A549 (cell line): ENCODE measurements at regions of chr21 and their contacts with region 1.

Region 1: GRCh38 chr21:33608559-33608958 is 20.1 kb upstream of the DONSON start:
- DNase-seq: no peak
- ATAC-seq: no peak
- H3K4me3 ChIP-seq: no peak overlapping the region
- H3K27ac ChIP-seq: no peak overlapping the region
- H3K4me1 ChIP-seq: no peaks in the 10 kb centered on the region
- CTCF ChIP-seq: no peak
- EP300 ChIP-seq: no peak
- POLR2A ChIP-seq: no peak
- RAD21 ChIP-seq: no peak

Region 2: DNA sequence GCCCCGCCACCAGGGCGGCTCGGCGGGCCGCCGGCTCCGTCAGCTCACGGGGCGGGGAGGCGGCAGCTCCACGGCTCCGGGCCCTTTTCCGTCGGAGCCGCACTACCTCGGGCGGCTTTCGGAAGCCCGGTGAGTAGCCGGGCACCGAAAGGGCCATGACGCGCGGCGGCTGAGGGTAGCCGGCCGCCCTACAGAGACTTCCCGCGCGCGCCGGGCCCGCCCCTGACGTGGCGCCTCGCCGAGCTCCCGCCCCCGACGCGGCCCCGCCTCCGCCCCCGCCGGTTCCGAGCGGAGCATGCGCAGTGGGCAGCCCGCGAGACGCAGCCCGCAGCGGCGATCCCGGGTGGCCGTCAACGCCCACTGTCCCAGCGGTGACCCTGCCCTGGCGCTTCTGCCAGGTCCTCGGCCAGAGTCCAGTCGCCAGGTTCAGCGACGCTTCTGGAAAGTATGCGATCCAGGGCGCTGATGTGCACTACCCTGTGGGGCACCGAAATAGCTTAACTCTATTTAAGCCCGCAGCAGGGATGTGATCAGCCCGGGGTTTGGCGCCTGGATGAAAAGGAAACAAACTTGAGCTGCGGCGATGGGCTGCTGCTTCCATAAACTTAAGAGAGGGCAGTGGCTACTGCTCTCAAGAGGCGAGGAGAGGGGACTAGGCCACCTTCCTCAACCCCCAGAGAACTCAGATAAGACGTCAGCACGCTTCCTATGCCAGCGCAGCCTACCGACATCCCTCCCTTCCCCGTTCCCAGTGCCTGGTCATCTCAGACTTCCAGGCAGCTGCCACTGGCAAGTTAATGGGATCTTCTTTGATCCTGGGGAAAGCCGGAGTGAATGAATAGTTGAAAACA is 19.8 kb before region 1 on chr21 and contains the start of gene DONSON:
- CTCF ChIA-PET with region 1: interaction called, 19 read pairs
- POLR2A ChIA-PET with region 1: interaction called, 4 read pairs
- DNase-seq: peak; percentile 74 to 83
- ATAC-seq: peak; percentile 90 to 92
- H3K4me3 ChIP-seq: peak within 1 kb of the TSS; percentile 89
- H3K27ac ChIP-seq: peak within 1 kb of the TSS; percentile 92 to 96
- H3K4me1 ChIP-seq: peaks cover 19% of the 10 kb centered on the region
- CTCF ChIP-seq: no peak
- EP300 ChIP-seq: no peak
- POLR2A ChIP-seq: peak; percentile 45
- RAD21 ChIP-seq: no peak
- polyA plus RNA-seq, gene DONSON: 30.3 and 32.0 TPM in 2 replicates

Region 3: DNA sequence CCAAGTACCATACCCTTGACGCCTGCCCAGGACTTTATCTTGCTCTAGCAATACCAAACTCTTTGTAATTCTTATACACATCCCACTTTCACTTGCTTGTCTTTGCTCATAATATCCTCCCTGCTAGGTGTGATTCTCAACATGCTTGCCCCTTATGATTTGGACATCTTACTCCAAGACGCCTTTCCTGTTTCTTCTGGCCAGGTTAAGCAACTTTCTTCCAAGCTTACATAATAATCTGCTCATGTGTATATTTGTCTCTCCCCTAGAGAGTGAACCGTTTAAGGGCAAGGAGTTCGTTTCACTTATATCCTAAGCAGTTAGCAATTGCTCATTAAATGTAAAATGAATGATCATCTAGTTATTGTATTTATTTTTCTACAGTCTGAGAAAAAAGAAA is 11.2 kb after region 1 on chr21:
- CTCF ChIA-PET with region 1: interaction called, 24 read pairs
- POLR2A ChIA-PET with region 1: interaction called, 4 read pairs
- DNase-seq: no peak
- ATAC-seq: no peak
- H3K4me3 ChIP-seq: no peak overlapping the region
- H3K27ac ChIP-seq: no peak overlapping the region
- H3K4me1 ChIP-seq: no peaks in the 10 kb centered on the region
- CTCF ChIP-seq: no peak
- EP300 ChIP-seq: no peak
- POLR2A ChIP-seq: no peak
- RAD21 ChIP-seq: no peak